Activated naive CD4-positive, alpha-beta T cell treated with anti-CD3 and anti-CD28 coated beads for 36 hours (primary cell): ENCODE measurements at regions of chr2 and their contacts with region 1.

Region 1: GRCh38 chr2:216666461-216667233 is 28.7 kb downstream of the IGFBP5 start:
- DNase-seq: peak; percentile 83
- H3K4me3 Mint-ChIP-seq: no peak overlapping the region
- H3K27ac Mint-ChIP-seq: no peak overlapping the region
- H3K4me1 Mint-ChIP-seq: no peaks in the 10 kb centered on the region
- H3K27me3 Mint-ChIP-seq: peaks cover 3% of the 10 kb centered on the region

Region 2: GRCh38 chr2:215949991-215950404 is 716.6 kb before region 1 on chr2:
- CTCF ChIA-PET with region 1: interaction called, 5 read pairs
- intact Hi-C with region 1: loop called (anchors 1 kb)
- DNase-seq: no peak
- H3K4me3 Mint-ChIP-seq: no peak overlapping the region
- H3K27ac Mint-ChIP-seq: no peak overlapping the region
- H3K4me1 Mint-ChIP-seq: no peaks in the 10 kb centered on the region
- H3K27me3 Mint-ChIP-seq: no peaks in the 10 kb centered on the region

Region 3: GRCh38 chr2:216222650-216223352 is 443.8 kb before region 1 on chr2:
- CTCF ChIA-PET with region 1: interaction called, 7 read pairs
- intact Hi-C with region 1: loop called (anchors 2 kb)
- DNase-seq: peak; percentile 56
- H3K4me3 Mint-ChIP-seq: no peak overlapping the region
- H3K27ac Mint-ChIP-seq: peak overlapping the region; percentile 41
- H3K4me1 Mint-ChIP-seq: peaks cover 28% of the 10 kb centered on the region
- H3K27me3 Mint-ChIP-seq: no peaks in the 10 kb centered on the region

Region 4: DNA sequence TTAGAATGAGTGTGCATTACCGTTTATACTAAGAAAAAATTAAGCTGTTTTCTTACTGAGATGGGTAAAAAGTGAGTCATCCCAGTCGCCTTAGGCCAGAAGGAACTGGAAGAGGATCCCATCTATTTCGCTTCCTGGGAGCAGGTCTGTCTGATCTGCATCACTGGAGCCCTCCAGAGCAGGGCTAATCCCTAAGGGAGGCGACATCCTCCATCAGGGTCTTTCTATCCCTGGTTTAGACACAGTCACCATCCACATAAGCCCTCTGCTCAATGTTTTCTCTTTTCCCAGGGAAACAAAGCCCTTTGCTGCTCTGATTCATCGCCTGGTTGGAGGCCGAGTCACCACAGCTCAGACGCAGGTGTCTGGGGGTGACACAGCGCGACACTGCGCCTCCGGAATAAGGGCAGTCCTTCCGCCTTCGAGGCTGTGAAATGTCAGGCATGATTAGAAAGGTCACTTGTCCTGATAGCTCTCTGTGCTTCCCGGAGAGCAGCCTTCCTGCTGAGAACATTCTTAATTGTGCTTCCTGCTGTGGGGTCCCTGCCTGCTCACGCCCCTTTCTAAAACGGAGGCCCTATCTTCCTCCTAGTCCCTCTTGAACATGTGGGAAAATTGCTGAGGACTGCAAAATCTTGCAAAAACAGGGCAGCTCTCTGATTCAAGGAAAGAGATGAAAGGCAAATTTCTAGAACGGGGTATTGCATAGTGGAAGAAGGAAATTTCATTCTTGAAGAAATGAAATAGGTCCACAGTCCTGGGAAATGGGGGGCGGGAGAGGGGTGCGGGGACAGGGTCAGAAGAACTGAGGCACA is 350.7 kb before region 1 on chr2:
- CTCF ChIA-PET with region 1: no interaction called
- intact Hi-C with region 1: loop called (anchors 10 kb)
- DNase-seq: no peak
- H3K4me3 Mint-ChIP-seq: no peak overlapping the region
- H3K27ac Mint-ChIP-seq: no peak overlapping the region
- H3K4me1 Mint-ChIP-seq: peaks cover 11% of the 10 kb centered on the region
- H3K27me3 Mint-ChIP-seq: no peaks in the 10 kb centered on the region

Region 5: GRCh38 chr2:216404010-216404618 is 262.5 kb before region 1 on chr2:
- CTCF ChIA-PET with region 1: interaction called, 3 read pairs
- intact Hi-C with region 1: loop called (anchors 2 kb)
- DNase-seq: peak; percentile 71
- H3K4me3 Mint-ChIP-seq: no peak overlapping the region
- H3K27ac Mint-ChIP-seq: no peak overlapping the region
- H3K4me1 Mint-ChIP-seq: no peaks in the 10 kb centered on the region
- H3K27me3 Mint-ChIP-seq: no peaks in the 10 kb centered on the region

Region 6: DNA sequence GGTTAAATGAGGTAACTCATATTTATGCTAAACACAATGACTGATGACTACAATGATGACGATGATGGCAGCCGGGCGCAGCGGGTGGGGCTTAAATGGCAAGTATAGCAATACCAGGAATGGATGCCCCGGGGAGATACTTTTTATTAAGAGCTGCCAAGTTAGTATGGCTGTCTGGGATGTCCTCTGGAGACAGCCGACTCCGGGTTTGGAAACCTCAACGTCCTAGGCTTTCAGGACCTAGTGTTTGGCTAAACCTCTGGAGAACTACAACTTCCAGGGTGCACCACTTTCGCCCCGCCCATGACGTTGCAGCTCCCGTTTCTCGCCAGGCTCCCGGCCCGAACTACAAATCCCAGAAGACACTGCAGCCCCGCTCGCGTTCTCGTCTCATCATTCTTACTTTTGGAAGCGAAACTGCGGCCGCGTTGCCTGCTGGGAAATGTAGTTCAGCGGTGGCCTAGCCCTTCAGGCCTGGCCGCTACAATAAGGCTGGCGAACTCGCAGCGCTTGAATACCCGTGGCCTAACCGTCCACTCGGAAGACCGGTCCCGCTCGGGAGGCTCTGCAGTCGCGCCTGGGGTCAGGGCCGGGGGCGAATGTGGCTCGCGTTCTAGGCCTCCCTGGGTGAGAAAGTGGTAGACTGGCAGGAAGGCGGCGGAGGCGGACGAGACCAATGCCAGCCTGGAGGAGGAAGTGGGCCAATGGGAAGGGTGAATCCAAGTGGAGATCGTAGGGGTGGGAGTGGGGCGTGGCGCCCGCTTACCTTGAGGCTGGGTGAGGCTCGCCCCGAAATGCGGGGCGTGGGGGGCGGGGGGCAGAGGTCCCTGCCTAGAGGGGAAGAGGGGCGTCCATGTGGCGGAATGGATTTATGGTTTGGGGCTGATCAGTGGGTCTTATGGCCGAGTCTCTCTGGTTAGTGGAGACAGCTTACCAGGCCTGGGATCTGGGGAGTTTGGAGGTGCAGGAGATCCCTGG is 254.3 kb before region 1 on chr2 and contains the start of gene SMARCAL1:
- CTCF ChIA-PET with region 1: no interaction called
- intact Hi-C with region 1: loop called (anchors 2 kb)
- DNase-seq: peak; percentile 100
- H3K4me3 Mint-ChIP-seq: peak within 1 kb of the TSS; percentile 92
- H3K27ac Mint-ChIP-seq: peak within 1 kb of the TSS; percentile 90
- H3K4me1 Mint-ChIP-seq: peaks cover 6% of the 10 kb centered on the region
- H3K27me3 Mint-ChIP-seq: no peaks in the 10 kb centered on the region
- total RNA-seq, gene SMARCAL1: 17.0 to 18.2 TPM

Region 7: GRCh38 chr2:216519154-216519762 is 147.4 kb before region 1 on chr2:
- CTCF ChIA-PET with region 1: interaction called, 203 read pairs
- intact Hi-C with region 1: loop called (anchors 1 kb)
- DNase-seq: peak; percentile 69
- H3K4me3 Mint-ChIP-seq: no peak overlapping the region
- H3K27ac Mint-ChIP-seq: no peak overlapping the region
- H3K4me1 Mint-ChIP-seq: no peaks in the 10 kb centered on the region
- H3K27me3 Mint-ChIP-seq: no peaks in the 10 kb centered on the region

Region 8: DNA sequence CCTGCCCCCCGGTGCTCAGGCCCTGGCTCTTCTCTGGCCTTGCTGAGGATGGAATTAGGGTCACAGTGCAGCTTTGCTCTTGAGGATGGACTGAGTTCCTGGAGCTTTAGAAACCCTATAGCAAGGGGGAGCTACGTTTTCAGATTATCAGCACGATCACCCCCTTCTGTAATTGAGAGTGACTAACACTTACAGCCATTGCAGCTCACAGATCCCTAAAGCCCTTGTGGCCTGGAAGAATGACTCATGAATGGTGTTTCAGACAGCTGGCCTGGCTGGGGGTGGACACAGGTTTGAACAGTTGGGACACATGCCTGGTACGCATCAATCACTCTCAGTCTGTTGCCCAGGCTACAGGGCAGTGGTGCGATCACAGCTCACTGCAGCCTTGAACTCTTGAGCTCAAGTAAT is 108.4 kb after region 1 on chr2:
- CTCF ChIA-PET with region 1: no interaction called
- intact Hi-C with region 1: no loop called
- DNase-seq: no peak
- H3K4me3 Mint-ChIP-seq: no peak overlapping the region
- H3K27ac Mint-ChIP-seq: no peak overlapping the region
- H3K4me1 Mint-ChIP-seq: no peaks in the 10 kb centered on the region
- H3K27me3 Mint-ChIP-seq: peaks cover 2% of the 10 kb centered on the region